IMR-90 (cell line): ENCODE measurements at regions of chr3 and their contacts with region 1.

Region 1: GRCh38 chr3:132029182-132029902 is 5.5 kb downstream of the CPNE4 start:
- DNase-seq: peak; percentile 61
- ATAC-seq: peak; percentile 100
- H3K4me3 ChIP-seq: no peak overlapping the region
- H3K27ac ChIP-seq: no peak overlapping the region
- H3K4me1 ChIP-seq: no peaks in the 10 kb centered on the region
- H3K27me3 ChIP-seq: peaks cover 14% of the 10 kb centered on the region
- CTCF ChIP-seq: peak; percentile 82
- POLR2A ChIP-seq: no peak
- RAD21 ChIP-seq: peak; percentile 90

Region 2: GRCh38 chr3:130759699-130760338 is 1269.5 kb before region 1 on chr3:
- CTCF ChIA-PET with region 1: no interaction called
- POLR2A ChIA-PET with region 1: no interaction called
- dilution Hi-C with region 1: no loop called
- in situ Hi-C with region 1: no loop called
- intact Hi-C with region 1: loop called (anchors 5 kb)
- DNase-seq: peak; percentile 49
- ATAC-seq: peak; percentile 92
- H3K4me3 ChIP-seq: no peak overlapping the region
- H3K27ac ChIP-seq: no peak overlapping the region
- H3K4me1 ChIP-seq: no peaks in the 10 kb centered on the region
- H3K27me3 ChIP-seq: peaks cover 2% of the 10 kb centered on the region; the same call in 1 of the 2 replicates
- CTCF ChIP-seq: peak; percentile 76
- POLR2A ChIP-seq: no peak
- RAD21 ChIP-seq: peak; percentile 72

Region 3: DNA sequence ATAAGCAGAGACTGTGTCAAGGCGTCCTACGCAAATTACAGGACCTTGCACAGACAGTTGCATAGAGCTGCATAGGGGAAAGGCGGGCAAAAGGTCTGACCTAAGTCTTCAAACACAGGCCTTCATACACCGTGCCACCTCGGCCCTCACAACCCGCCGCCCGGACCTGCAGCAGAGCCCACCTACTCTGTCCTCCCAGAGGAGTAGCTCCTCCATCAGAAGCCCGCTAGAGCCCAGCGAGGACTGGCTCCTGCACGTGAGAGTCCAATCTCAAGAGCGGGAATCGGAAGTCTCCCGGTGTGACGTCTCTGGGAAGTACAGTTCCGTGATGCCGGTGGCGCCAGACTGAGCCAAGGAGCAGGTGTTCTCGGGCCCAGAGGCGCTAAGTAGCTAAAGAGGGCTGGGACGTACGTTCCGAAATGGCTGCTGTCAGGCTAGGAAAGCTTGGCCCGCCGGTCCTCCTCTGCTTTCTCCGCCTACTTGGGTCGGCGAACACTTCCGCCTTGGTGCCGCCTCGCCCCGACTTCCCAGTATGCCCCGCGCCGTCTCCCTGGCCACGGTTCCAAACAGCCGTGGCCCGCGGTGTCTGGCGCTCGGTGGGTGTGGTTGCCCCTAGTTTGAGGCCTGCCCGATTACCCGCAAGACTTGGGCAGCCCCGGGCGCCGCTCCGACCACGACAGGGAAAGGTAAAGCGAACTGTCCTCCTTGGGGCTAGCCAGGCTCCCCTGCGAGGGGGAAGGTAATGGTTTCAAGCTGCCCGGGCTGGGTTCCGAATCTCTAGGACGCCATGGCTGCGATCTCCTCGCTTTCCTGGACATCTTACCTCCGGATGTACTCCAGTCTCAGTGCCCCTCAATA is 1002.8 kb before region 1 on chr3 and contains the starts of genes ASTE1 and NEK11:
- CTCF ChIA-PET with region 1: no interaction called
- POLR2A ChIA-PET with region 1: no interaction called
- dilution Hi-C with region 1: no loop called
- in situ Hi-C with region 1: loop called (anchors 25 kb)
- intact Hi-C with region 1: no loop called
- DNase-seq: peak; percentile 73
- ATAC-seq: peak; percentile 99
- H3K4me3 ChIP-seq: peak within 1 kb of the TSS; percentile 96
- H3K27ac ChIP-seq: peak within 1 kb of the TSS; percentile 96
- H3K4me1 ChIP-seq: peaks cover 2% of the 10 kb centered on the region; the same call in 1 of the 2 replicates
- H3K27me3 ChIP-seq: no peaks in the 10 kb centered on the region
- CTCF ChIP-seq: no peak
- POLR2A ChIP-seq: peak; percentile 70
- RAD21 ChIP-seq: no peak
- total RNA-seq, gene ASTE1: 7.5 and 8.1 TPM in 2 replicates
- total RNA-seq, gene NEK11: 1.6 and 1.9 TPM in 2 replicates

Region 4: DNA sequence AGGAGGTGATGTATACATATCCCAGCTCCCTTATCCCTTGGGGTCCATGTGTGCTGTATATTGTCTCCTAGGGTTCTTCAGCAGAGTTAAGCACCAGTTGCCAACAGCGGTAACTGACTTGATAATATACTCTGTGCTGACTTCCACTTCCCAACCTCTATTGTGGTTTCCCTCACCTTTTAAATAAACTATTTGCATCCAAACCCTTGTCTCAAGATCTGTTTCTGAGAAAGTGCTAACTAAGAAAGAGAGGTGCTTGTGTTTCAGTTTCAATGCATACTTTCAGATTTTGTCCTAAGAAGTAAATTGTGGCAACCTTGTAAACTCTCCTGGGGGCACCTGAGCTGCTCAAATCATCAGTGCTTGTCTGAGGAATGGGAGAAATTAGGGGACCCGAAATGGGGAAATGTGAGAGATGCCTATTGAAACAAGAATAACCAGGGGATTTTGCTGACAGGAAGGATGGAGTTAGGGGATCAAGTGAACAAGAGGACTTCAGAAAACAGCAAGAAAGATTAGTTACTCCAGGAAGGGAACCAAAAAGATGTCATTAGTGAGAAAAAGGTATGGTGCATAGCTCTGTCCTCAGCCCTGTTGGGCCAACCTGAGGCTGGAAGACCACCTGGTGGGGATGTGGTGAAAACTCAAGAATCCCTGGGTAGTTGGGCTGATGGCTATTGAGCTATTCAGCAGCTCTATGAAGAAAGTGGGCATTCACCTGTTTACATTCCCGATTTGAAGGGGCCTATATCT is 475.7 kb before region 1 on chr3:
- CTCF ChIA-PET with region 1: no interaction called
- POLR2A ChIA-PET with region 1: no interaction called
- dilution Hi-C with region 1: no loop called
- in situ Hi-C with region 1: no loop called
- intact Hi-C with region 1: loop called (anchors 10 kb)
- DNase-seq: no peak
- ATAC-seq: no peak
- H3K4me3 ChIP-seq: no peak overlapping the region
- H3K27ac ChIP-seq: no peak overlapping the region
- H3K4me1 ChIP-seq: no peaks in the 10 kb centered on the region
- H3K27me3 ChIP-seq: no peaks in the 10 kb centered on the region; the same call in 1 of the 2 replicates
- CTCF ChIP-seq: no peak
- POLR2A ChIP-seq: no peak
- RAD21 ChIP-seq: no peak

Region 5: GRCh38 chr3:131868203-131868602 is 161.1 kb before region 1 on chr3:
- CTCF ChIA-PET with region 1: no interaction called
- POLR2A ChIA-PET with region 1: no interaction called
- dilution Hi-C with region 1: no loop called
- in situ Hi-C with region 1: no loop called
- intact Hi-C with region 1: no loop called
- DNase-seq: no peak
- ATAC-seq: no peak
- H3K4me3 ChIP-seq: no peak overlapping the region
- H3K27ac ChIP-seq: no peak overlapping the region
- H3K4me1 ChIP-seq: no peaks in the 10 kb centered on the region
- H3K27me3 ChIP-seq: no peaks in the 10 kb centered on the region
- CTCF ChIP-seq: no peak
- POLR2A ChIP-seq: no peak
- RAD21 ChIP-seq: no peak